Heart right ventricle (tissue), 16 donors: ENCODE measurements at regions of chr12 and their contacts with region 1.

Region 1: DNA sequence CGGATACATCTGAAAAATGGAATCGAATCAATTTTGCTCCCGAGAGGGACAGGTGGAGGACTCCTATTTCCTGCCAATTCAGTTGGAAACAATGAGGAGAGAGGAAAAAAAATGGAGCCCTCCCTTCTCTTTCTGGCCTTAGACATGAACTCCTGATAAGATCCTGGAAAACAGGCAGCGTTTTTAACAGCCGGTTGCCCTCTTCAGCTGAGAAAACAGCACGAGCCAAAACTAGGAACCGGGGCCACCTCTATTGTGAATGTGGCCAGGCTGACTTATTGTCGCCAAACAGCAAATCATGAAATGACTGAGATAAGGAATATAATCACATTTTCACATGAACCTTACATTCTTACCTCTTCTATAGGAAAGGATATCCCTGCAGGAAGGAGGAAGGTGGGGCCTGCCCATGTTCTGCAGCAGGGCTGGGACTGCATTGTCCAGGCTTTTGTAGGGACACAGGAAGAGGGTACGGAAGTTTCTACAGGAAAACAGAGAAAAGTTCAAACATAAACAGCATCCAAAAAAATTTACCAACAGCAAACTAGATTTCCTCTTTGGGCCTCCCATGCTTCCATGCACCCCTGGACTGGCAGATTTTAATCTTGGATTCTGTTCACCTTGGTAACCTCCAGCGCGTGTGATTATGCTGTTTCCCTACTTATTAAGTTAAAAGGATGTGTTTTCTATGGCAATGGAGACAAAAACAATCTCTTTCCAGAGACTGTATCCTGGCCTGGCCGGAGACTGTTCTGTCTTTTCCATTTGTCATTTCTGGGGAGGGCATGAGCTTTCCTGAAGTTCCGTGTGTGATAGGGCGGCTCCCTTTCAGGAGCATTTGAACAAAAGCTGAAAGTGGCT is 29.0 kb upstream of the ELK3 start:
- DNase-seq: peak; percentile 27 to 72
- ATAC-seq: peak; percentile 68 to 91 (median 86)
- H3K4me3 ChIP-seq: no peak overlapping the region
- H3K27ac ChIP-seq: peak overlapping the region; percentile 61 to 92 (median 80)
- H3K4me1 ChIP-seq: peaks cover 2 to 58% (median 24%) of the 10 kb centered on the region in 9 donors
- H3K27me3 ChIP-seq: no peaks in the 10 kb centered on the region
- CTCF ChIP-seq: no peak

Region 2: DNA sequence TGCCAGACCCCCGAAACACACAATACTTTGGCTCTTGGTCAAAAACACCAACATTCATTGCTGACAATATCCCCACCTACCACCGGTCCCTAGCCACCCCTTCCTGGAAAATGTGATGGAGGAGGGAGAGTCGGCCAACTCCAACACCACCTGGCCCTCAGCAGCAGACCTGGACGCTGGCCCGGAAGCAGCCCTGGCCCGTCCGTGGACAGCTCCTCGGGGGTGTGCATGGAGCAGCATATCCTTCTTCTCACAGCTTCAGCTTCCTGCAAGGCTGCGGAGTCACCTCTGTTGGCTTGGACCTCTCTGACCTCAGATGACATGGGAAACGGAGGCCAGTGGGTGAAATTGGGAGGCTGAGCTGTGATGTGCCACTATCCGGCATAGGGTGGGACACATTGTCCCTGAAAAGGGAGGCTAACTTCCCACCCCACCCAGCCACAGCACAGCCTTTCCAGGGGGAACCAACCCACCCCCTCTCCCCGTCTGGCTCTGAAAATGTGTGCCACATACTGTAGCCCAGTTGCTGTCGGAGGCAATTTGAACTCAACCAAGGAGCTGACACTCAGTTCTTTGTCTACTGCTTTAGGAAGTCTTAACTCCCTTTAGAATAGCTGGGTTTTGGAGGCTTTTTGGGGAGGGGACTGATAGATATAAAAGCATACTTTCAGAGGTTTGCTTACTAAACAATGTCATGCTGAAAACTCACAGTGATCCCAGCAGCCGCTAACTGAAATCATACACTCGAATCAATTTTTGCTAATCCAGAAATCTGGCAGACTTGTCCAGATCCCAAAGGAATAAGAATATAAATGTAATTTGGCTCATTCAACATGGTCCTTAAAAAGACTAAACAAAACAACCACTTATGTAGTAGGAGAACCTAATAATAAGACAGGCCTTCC is 86.7 kb before region 1 on chr12:
- intact Hi-C with region 1: loop called in 1 of 10 experiments (anchors 2 kb)
- DNase-seq: peak; percentile 70 to 82
- ATAC-seq: peak; percentile 88 to 96 (median 92)
- H3K4me3 ChIP-seq: peak overlapping the region in 1 of 10 donors; percentile 16
- H3K27ac ChIP-seq: peak overlapping the region; percentile 31 to 81 (median 58)
- H3K4me1 ChIP-seq: peaks cover 3 to 49% (median 26%) of the 10 kb centered on the region in 9 donors
- H3K27me3 ChIP-seq: peaks cover 0 to 8% (median 0%) of the 10 kb centered on the region in 7 donors
- CTCF ChIP-seq: no peak

Region 3: DNA sequence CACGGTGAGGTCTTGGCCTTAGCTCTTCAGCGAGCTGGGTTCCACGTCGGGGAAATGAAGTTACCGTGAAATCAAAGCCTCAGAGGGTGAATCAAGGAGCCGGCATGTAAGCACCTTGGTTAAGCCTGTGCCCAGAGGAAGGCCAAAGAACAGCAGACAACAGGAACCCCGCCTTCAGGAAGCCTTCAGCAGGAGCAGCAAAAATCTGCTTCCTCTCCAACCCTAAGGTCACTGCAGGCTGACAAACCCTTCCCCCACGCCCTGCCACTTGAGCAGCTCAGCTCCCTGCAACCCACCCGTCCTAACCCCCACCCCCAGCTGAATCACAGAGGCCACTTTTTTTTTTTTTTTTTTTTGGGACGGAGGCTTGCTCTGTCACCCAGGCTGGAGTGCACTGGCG is 56.9 kb before region 1 on chr12:
- intact Hi-C with region 1: loop called in 2 of 10 experiments (anchors 2 to 10 kb)
- DNase-seq: peak; percentile 40 to 61
- ATAC-seq: peak; percentile 62 to 93 (median 88)
- H3K4me3 ChIP-seq: peak overlapping the region in 3 of 10 donors; percentile 8 to 14 (median 14)
- H3K27ac ChIP-seq: peak overlapping the region; percentile 63 to 94 (median 80)
- H3K4me1 ChIP-seq: peaks cover 0 to 46% (median 14%) of the 10 kb centered on the region in 9 donors
- H3K27me3 ChIP-seq: no peaks in the 10 kb centered on the region
- CTCF ChIP-seq: no peak

Region 4: DNA sequence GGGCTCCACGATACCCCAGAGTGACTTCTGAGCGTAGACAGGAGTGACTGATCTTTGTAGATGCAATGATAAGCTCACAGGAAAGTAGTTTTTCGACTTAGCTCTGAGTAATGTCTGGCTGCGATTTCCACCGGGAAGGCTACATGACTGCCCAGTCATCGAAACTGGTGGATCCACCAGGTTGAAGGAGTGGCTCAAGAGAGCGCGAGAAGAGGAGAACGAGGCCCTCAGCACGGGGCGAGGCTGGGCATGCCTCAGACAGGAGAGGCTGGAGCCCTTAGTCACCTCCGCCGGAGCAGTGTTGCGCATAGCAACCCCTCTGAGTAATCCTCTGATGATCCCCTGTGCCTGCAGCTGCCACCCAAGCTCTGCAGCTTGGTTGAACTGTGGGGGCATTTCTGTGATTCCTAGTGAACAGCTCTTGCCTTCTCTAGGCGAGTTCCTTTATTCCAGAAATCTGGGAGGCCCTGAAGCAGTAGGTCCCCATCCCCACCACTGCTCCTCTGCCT is 54.6 kb after region 1 on chr12:
- intact Hi-C with region 1: loop called in 1 of 10 experiments (anchors 2 kb)
- DNase-seq: no peak
- ATAC-seq: peak in 4 of 8 donors; percentile 10 to 57 (median 23)
- H3K4me3 ChIP-seq: no peak overlapping the region
- H3K27ac ChIP-seq: peak overlapping the region in 4 of 10 donors; percentile 8 to 60 (median 30)
- H3K4me1 ChIP-seq: peaks cover 0 to 95% (median 68%) of the 10 kb centered on the region in 9 donors
- H3K27me3 ChIP-seq: no peaks in the 10 kb centered on the region
- CTCF ChIP-seq: no peak